GM12878 (cell line): ENCODE measurements at regions of chrX and their contacts with region 1.

Region 1: DNA sequence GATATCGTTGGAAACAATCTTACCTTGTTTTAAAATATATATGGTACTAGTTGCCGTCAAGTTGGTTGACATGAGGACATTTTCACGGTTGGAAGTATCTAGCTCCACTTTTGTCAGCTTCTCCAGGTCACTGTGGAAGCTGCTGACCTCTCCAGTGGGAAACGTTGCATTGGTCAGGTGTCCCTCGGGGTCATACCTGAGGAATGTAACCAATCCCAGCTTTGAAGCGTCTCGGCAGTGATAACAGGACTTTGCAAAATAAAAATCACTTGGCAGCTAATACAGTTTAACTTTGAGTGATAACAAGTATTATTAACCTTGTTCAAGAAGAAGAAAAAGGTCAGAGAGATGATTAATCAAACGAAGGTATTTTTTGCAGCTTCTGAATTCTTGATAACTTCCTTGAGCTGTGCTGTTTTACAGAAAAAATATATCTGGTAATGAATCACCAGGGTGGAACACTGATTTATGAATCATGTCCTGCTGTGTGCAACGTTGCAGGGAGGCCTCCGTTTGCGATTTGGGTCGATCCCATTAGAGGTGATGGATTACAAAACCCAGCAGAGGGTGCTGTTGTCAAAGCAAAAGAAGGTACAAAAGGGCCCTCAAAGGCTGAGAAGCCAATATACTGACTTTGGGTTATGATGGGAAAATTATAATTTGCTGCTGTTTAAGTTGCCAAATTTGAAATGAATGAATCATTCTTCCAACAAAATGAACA is 60.1 kb downstream of the SH2D1A start:
- DNase-seq: no peak
- ATAC-seq: peak; percentile 97
- H3K4me3 ChIP-seq: no peak overlapping the region
- H3K27ac ChIP-seq: no peak overlapping the region
- H3K4me1 ChIP-seq: no peaks in the 10 kb centered on the region
- H3K27me3 ChIP-seq: no peaks in the 10 kb centered on the region; a peak in 1 of 4 replicates
- CTCF ChIP-seq: peak; percentile 46 to 79 (median 46); a peak in 5 of 6 replicates
- EP300 ChIP-seq: no peak
- POLR2A ChIP-seq: no peak
- RAD21 ChIP-seq: peak; percentile 84

Region 2: DNA sequence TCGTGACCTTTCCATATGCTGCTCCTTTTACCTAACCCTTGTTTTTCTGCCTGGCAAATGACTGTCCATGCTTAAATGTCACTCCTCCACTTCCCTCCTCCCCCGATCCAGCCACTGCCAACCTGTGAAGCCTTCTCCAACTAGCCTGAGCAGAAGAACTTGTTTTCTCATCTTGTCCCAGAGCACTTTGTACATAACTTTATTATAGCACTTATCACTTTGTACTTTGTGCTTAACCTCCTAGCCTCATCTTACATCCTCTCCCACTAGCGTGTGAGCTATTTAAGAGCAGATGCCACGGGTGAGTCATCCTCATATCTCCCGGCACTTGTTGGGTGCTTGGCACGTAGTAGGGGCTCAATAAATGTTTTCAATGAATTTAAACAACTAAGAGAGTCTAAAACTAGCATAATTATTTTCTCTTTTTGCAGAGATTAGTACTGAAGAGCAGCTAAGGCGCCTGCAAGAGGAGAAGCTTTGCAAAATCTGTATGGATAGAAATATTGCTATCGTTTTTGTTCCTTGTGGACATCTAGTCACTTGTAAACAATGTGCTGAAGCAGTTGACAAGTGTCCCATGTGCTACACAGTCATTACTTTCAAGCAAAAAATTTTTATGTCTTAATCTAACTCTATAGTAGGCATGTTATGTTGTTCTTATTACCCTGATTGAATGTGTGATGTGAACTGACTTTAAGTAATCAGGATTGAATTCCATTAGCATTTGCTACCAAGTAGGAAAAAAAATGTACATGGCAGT is 499.7 kb before region 1 on chrX:
- CTCF ChIA-PET with region 1: no interaction called
- POLR2A ChIA-PET with region 1: no interaction called
- RAD21 ChIA-PET with region 1: no interaction called
- SMC1A ChIA-PET with region 1: no interaction called
- in situ Hi-C with region 1: no loop called
- intact Hi-C with region 1: no loop called
- DNase-seq: no peak
- ATAC-seq: no peak
- H3K4me3 ChIP-seq: no peak overlapping the region
- H3K27ac ChIP-seq: no peak overlapping the region
- H3K4me1 ChIP-seq: no peaks in the 10 kb centered on the region
- H3K27me3 ChIP-seq: no peaks in the 10 kb centered on the region
- CTCF ChIP-seq: no peak
- EP300 ChIP-seq: no peak
- POLR2A ChIP-seq: no peak
- RAD21 ChIP-seq: no peak

Region 3: DNA sequence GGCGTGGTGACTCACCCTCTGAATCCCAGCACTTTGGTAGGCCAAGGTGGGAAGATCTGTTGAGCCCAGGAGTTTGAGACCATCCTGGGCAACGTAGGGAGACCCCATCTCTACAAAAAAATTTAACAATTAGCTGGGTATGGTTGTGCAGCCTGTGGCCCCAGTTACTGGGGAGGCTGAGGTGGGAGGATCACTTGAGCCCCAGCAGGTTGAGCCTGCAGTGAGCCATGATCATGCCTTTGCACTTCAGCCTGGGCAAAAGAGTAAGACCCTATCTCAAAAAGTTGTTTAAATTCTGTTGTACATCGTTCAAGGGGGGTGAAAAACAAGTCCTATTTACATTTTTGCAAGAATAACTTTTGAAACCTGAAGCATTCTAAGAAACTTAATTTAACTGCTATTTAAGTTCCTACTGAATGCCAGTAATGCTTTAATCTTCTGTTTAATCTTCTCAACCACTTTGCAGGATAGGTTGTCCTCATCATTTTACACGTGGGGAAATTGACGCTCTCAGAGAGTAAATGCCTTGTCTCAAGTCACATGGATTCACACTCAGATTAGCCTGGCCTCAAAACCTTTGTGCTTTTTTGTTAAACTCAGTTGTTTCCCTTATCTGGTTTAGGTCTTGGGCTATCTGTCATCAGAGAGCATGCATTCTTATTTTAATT is 437.9 kb before region 1 on chrX:
- CTCF ChIA-PET with region 1: no interaction called
- POLR2A ChIA-PET with region 1: no interaction called
- RAD21 ChIA-PET with region 1: no interaction called
- SMC1A ChIA-PET with region 1: no interaction called
- in situ Hi-C with region 1: no loop called
- intact Hi-C with region 1: no loop called
- DNase-seq: no peak
- ATAC-seq: no peak
- H3K4me3 ChIP-seq: no peak overlapping the region
- H3K27ac ChIP-seq: no peak overlapping the region
- H3K4me1 ChIP-seq: no peaks in the 10 kb centered on the region
- H3K27me3 ChIP-seq: no peaks in the 10 kb centered on the region
- CTCF ChIP-seq: no peak
- EP300 ChIP-seq: no peak
- POLR2A ChIP-seq: no peak
- RAD21 ChIP-seq: no peak

Region 4: GRCh38 chrX:124395145-124395880 is 11.1 kb before region 1 on chrX:
- CTCF ChIA-PET with region 1: interaction called, 14 read pairs
- POLR2A ChIA-PET with region 1: no interaction called
- RAD21 ChIA-PET with region 1: interaction called, 4 read pairs
- SMC1A ChIA-PET with region 1: interaction called, 36 read pairs
- in situ Hi-C with region 1: no loop called
- intact Hi-C with region 1: no loop called
- DNase-seq: no peak
- ATAC-seq: peak; percentile 72
- H3K4me3 ChIP-seq: no peak overlapping the region
- H3K27ac ChIP-seq: no peak overlapping the region
- H3K4me1 ChIP-seq: peaks cover 3% of the 10 kb centered on the region; the same call in 1 of the 2 replicates
- H3K27me3 ChIP-seq: no peaks in the 10 kb centered on the region
- CTCF ChIP-seq: no peak
- EP300 ChIP-seq: no peak
- POLR2A ChIP-seq: no peak
- RAD21 ChIP-seq: no peak

Region 5: GRCh38 chrX:125132285-125132684 is 725.8 kb after region 1 on chrX:
- CTCF ChIA-PET with region 1: interaction called, 41 read pairs
- POLR2A ChIA-PET with region 1: no interaction called
- RAD21 ChIA-PET with region 1: interaction called, 24 read pairs
- SMC1A ChIA-PET with region 1: interaction called, 18 read pairs
- in situ Hi-C with region 1: loop called (anchors 25 kb)
- intact Hi-C with region 1: loop called (anchors 5 kb)
- DNase-seq: no peak
- ATAC-seq: peak; percentile 65; the same call in 2 of the 3 replicates
- H3K4me3 ChIP-seq: no peak overlapping the region
- H3K27ac ChIP-seq: no peak overlapping the region
- H3K4me1 ChIP-seq: no peaks in the 10 kb centered on the region
- H3K27me3 ChIP-seq: no peaks in the 10 kb centered on the region
- CTCF ChIP-seq: peak; percentile 25 to 53 (median 42); a peak in 4 of 6 replicates
- EP300 ChIP-seq: no peak
- POLR2A ChIP-seq: no peak
- RAD21 ChIP-seq: peak; percentile 39; the same call in 1 of the 2 replicates